Left ventricle myocardium superior (tissue), 1 donor: ENCODE measurements at regions of chr4 and their contacts with region 1.

Region 1: GRCh38 chr4:125389713-125390112 is 75.0 kb downstream of the FAT4 start:
- DNase-seq: no peak
- ATAC-seq: peak; percentile 75

Region 2: GRCh38 chr4:125323654-125324053 is 66.1 kb before region 1 on chr4:
- intact Hi-C with region 1: loop called (anchors 10 kb)
- DNase-seq: no peak
- ATAC-seq: peak; percentile 77

Region 3: GRCh38 chr4:125677665-125678307 is 288.1 kb after region 1 on chr4:
- intact Hi-C with region 1: no loop called
- DNase-seq: no peak
- ATAC-seq: no peak

Region 4: GRCh38 chr4:125789023-125789422 is 399.3 kb after region 1 on chr4:
- intact Hi-C with region 1: no loop called
- DNase-seq: no peak
- ATAC-seq: no peak